ENCODE measurements at regions of chr17 and their contacts with region 1.

Region 1: DNA sequence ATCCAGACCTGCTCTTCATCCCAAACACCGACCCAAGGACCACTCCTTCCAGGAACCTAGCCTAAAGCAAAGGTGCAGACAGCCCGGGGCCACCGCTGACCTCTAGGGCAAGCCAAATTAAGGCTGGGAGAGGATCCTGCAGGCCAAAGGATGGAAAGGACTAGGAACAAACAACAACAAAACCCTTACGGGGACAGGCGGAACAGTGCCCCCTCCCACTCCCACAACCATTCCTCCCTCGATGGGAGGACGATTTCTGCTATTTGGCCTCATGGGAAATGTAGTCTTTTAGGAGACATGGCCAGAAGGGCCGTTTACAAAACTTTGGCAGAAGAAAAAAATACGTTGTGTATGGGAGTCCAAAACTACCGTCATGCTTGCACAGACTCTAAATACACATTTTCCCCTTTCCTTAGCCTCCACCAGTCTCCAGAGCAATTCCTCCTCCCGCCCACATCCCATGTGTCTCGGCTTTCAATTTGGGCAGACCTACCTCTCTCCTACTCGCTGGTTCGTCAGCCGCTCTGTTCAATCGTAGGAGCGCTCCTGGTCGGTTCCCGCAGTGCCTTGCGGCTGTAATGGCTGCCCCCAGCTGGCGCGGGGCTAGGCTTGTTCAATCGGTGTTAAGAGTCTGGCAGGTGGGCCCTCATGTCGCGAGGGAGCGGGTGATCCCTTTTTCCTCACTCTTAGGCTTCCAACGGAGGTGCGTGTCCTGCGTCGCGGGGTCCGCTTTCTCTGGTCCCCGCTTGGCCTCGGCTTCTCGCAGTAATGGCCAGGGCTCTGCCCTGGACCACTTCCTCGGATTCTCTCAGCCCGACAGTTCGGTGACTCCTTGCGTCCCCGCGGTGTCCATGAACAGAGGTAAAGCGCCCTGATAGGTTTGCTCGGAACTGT is at the start of gene ERAL1:
- DNase-seq: peak; percentile 93
- H3K4me3 Mint-ChIP-seq: peak within 1 kb of the TSS; percentile 79
- H3K27ac Mint-ChIP-seq: peak within 1 kb of the TSS; percentile 87
- H3K4me1 Mint-ChIP-seq: peaks cover 25% of the 10 kb centered on the region
- H3K27me3 Mint-ChIP-seq: no peaks in the 10 kb centered on the region
- total RNA-seq, gene ERAL1: 51.2 to 60.4 TPM

Region 2: GRCh38 chr17:28842282-28843012 is 12.3 kb before region 1 on chr17 and contains the start of gene FAM222B:
- CTCF ChIA-PET with region 1: interaction called, 5 read pairs
- intact Hi-C with region 1: loop called (anchors 1 kb)
- DNase-seq: peak; percentile 88
- H3K4me3 Mint-ChIP-seq: peak within 1 kb of the TSS; percentile 99
- H3K27ac Mint-ChIP-seq: peak within 1 kb of the TSS; percentile 95
- H3K4me1 Mint-ChIP-seq: peaks cover 31% of the 10 kb centered on the region
- H3K27me3 Mint-ChIP-seq: no peaks in the 10 kb centered on the region
- total RNA-seq, gene FAM222B: 11.2 TPM

Measured in activated naive CD4-positive, alpha-beta T cell treated with anti-CD3 and anti-CD28 coated beads for 36 hours (primary cell).